Caco-2 (cell line): ENCODE measurements at regions of chr16 and their contacts with region 1.

Region 1: DNA sequence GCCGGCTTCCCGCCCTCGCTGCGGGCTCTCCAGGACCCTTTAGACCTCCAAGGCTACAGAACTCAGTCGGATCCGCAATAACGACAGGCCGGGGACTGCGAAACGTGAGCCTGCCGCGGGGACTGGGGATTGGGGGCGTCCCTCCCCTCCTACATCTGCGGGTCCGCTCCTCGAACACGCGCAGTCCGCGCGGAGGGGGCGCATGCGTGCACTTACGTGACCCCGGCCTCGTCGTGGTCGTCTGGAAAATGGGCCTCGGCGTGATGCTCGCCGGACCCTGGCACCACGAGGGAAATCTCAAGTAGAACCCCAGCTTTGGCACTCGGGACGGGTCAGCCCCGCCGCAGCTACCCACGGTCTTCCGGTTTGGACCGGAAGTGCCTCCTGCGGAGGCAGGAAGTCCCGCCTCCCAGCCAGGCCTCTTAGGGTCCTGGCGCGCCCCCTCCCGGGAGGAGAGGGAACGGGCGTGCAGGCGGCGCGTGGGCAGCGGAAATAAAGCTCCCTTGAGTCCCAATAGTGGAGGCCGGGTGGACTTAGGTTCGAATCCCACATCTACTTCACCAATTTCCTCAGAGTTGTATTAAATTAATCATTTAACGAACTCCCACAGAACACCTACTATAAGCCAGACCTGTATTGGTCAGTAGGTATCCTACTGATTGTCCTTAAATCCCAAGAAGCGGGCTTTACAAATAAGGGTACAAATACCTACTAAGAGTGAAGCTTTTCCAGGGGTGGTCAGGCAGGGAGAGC is at the start of gene TAF1C:
- DNase-seq: peak; percentile 92 to 96
- H3K4me3 ChIP-seq: peak within 1 kb of the TSS; percentile 96
- H3K4me3 Mint-ChIP-seq: peak within 1 kb of the TSS; percentile 93
- H3K27ac Mint-ChIP-seq: peak within 1 kb of the TSS; percentile 96
- H3K4me1 ChIP-seq: peaks cover 4% of the 10 kb centered on the region; the same call in 1 of the 2 replicates
- H3K4me1 Mint-ChIP-seq: peaks cover 6% of the 10 kb centered on the region
- H3K27me3 ChIP-seq: no peaks in the 10 kb centered on the region
- H3K27me3 Mint-ChIP-seq: no peaks in the 10 kb centered on the region
- CTCF ChIP-seq: peak; percentile 97 to 98
- total RNA-seq, gene TAF1C: 69.9 and 79.7 TPM in 2 replicates

Region 2: DNA sequence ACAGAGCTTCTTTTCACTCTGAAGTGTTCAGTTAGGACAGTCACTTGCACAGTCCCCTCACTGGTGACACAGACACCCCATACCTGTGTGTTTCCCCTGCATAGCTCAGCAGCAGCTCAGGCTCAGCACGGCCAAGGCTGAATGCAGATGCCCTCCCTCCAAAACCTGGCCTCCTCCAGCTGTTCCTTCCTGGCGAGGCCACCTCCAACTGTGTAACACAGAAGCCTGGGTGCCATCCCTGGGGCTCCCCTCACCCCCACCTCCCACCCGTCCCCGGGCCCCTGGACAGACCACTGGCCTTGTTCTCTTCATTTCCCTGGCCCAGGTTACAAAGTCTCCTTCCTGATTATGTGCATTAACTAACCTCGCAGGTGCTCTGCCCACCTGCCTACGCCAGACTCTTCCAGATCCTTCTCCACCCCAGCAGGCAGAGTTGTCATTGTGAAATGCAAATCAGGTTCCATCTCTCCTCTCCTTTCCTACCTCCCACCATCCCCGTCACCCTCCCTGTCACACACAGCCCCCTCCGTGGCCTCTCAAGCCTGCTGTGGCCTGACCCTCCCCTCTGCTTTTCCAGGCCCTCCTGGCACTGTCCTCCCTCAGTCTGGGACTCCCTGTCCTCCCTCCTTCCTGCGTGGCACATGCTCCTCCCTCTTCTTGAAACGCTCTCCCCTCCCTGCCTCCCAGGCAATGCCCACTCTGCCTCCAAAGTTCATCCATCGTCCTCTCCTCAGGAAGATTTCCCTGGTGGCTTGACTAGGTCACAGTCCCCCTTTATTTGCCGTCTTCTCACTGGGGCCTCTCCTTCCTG is 261.6 kb before region 1 on chr16:
- CTCF ChIA-PET with region 1: no interaction called
- POLR2A ChIA-PET with region 1: no interaction called
- intact Hi-C with region 1: no loop called
- DNase-seq: no peak
- H3K4me3 ChIP-seq: no peak overlapping the region
- H3K4me3 Mint-ChIP-seq: no peak overlapping the region
- H3K27ac Mint-ChIP-seq: peak overlapping the region; percentile 49
- H3K4me1 ChIP-seq: peaks cover 34% of the 10 kb centered on the region
- H3K4me1 Mint-ChIP-seq: peaks cover 26% of the 10 kb centered on the region
- H3K27me3 ChIP-seq: no peaks in the 10 kb centered on the region
- H3K27me3 Mint-ChIP-seq: no peaks in the 10 kb centered on the region
- CTCF ChIP-seq: no peak

Region 3: DNA sequence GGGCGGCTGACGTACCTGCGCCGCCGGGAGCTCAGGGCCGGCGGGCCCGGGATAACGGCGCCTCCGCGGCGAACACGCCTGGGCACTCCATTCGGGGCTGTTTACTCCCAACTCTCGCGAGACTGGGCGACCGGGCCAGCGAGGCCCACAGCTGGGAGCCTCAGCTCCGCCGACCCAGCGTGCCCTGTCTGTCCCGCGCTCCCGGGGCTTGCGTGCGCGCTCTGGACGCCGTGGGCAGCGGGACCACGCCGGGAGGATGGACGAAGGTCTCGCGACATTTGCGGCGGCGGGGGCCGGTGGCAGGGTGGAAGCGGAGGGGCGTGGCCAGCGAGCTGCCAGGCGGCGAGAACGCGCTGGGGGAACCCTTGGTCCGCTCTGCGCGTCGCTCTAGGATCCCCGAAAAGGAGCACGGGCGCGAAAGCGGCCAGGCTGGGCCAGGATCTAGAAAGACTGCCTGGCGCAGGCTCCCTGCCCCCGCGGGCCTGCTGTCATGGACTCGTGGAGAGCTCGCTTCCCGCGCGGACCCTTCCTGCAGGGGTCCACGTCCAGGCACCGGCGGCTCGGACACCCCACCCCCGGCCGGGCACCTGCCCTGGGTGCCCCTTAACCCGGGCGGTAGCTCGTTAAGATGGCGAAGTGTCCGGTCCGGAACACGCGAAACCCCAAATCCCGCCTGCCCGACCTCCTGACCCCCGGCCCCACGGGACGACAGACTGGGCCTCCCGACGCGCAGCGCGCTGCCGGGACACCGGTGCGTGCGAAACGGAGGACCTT is 70.0 kb before region 1 on chr16 and contains the start of gene MBTPS1:
- CTCF ChIA-PET with region 1: interaction called, 11 read pairs
- POLR2A ChIA-PET with region 1: interaction called, 10 read pairs
- intact Hi-C with region 1: no loop called
- DNase-seq: peak; percentile 99 to 100
- H3K4me3 ChIP-seq: peak within 1 kb of the TSS; percentile 62
- H3K4me3 Mint-ChIP-seq: peak within 1 kb of the TSS; percentile 92
- H3K27ac Mint-ChIP-seq: peak within 1 kb of the TSS; percentile 96
- H3K4me1 ChIP-seq: no peaks in the 10 kb centered on the region
- H3K4me1 Mint-ChIP-seq: no peaks in the 10 kb centered on the region
- H3K27me3 ChIP-seq: no peaks in the 10 kb centered on the region
- H3K27me3 Mint-ChIP-seq: no peaks in the 10 kb centered on the region
- CTCF ChIP-seq: no peak
- total RNA-seq, gene MBTPS1: 93.2 and 96.4 TPM in 2 replicates

Region 4: GRCh38 chr16:84156342-84156784 is 30.5 kb before region 1 on chr16:
- CTCF ChIA-PET with region 1: interaction called, 14 read pairs
- POLR2A ChIA-PET with region 1: no interaction called
- intact Hi-C with region 1: no loop called
- DNase-seq: no peak
- H3K4me3 ChIP-seq: no peak overlapping the region
- H3K4me3 Mint-ChIP-seq: no peak overlapping the region
- H3K27ac Mint-ChIP-seq: no peak overlapping the region
- H3K4me1 ChIP-seq: no peaks in the 10 kb centered on the region
- H3K4me1 Mint-ChIP-seq: no peaks in the 10 kb centered on the region
- H3K27me3 ChIP-seq: no peaks in the 10 kb centered on the region
- H3K27me3 Mint-ChIP-seq: peaks cover 22% of the 10 kb centered on the region
- CTCF ChIP-seq: peak in 1 of 2 experiments; percentile 17

Region 5: GRCh38 chr16:84169765-84170310 is 17.0 kb before region 1 on chr16:
- CTCF ChIA-PET with region 1: interaction called, 19 read pairs
- POLR2A ChIA-PET with region 1: no interaction called
- intact Hi-C with region 1: no loop called
- DNase-seq: no peak
- H3K4me3 ChIP-seq: no peak overlapping the region
- H3K4me3 Mint-ChIP-seq: no peak overlapping the region
- H3K27ac Mint-ChIP-seq: no peak overlapping the region
- H3K4me1 ChIP-seq: no peaks in the 10 kb centered on the region
- H3K4me1 Mint-ChIP-seq: no peaks in the 10 kb centered on the region
- H3K27me3 ChIP-seq: no peaks in the 10 kb centered on the region
- H3K27me3 Mint-ChIP-seq: peaks cover 14% of the 10 kb centered on the region
- CTCF ChIP-seq: no peak

Region 6: GRCh38 chr16:84357191-84357651 is 170.4 kb after region 1 on chr16:
- CTCF ChIA-PET with region 1: no interaction called
- POLR2A ChIA-PET with region 1: no interaction called
- intact Hi-C with region 1: no loop called
- DNase-seq: no peak
- H3K4me3 ChIP-seq: no peak overlapping the region
- H3K4me3 Mint-ChIP-seq: no peak overlapping the region
- H3K27ac Mint-ChIP-seq: peak overlapping the region; percentile 31
- H3K4me1 ChIP-seq: peaks cover 17% of the 10 kb centered on the region; the same call in 1 of the 2 replicates
- H3K4me1 Mint-ChIP-seq: peaks cover 17% of the 10 kb centered on the region
- H3K27me3 ChIP-seq: no peaks in the 10 kb centered on the region
- H3K27me3 Mint-ChIP-seq: no peaks in the 10 kb centered on the region
- CTCF ChIP-seq: no peak

Region 7: GRCh38 chr16:84484579-84485254 is 297.9 kb after region 1 on chr16:
- CTCF ChIA-PET with region 1: interaction called, 4 read pairs
- POLR2A ChIA-PET with region 1: no interaction called
- intact Hi-C with region 1: loop called (anchors 10 kb)
- DNase-seq: peak; percentile 65 to 78
- H3K4me3 ChIP-seq: no peak overlapping the region
- H3K4me3 Mint-ChIP-seq: no peak overlapping the region
- H3K27ac Mint-ChIP-seq: no peak overlapping the region
- H3K4me1 ChIP-seq: no peaks in the 10 kb centered on the region
- H3K4me1 Mint-ChIP-seq: no peaks in the 10 kb centered on the region
- H3K27me3 ChIP-seq: no peaks in the 10 kb centered on the region
- H3K27me3 Mint-ChIP-seq: no peaks in the 10 kb centered on the region
- CTCF ChIP-seq: peak; percentile 87 to 90